ENCODE measurements at regions of chr19 and their contacts with region 1.

Region 1: GRCh38 chr19:19531951-19532805 is 3.5 kb downstream of the YJEFN3 start:
- DNase-seq: peak in 1 of 2 experiments; percentile 74
- H3K4me3 ChIP-seq: no peak overlapping the region
- H3K27ac ChIP-seq: no peak overlapping the region
- H3K4me1 ChIP-seq: no peaks in the 10 kb centered on the region
- H3K27me3 ChIP-seq: no peaks in the 10 kb centered on the region
- CTCF ChIP-seq: peak; percentile 99

Region 2: GRCh38 chr19:19554074-19555023 is 22.2 kb after region 1 on chr19:
- CTCF ChIA-PET with region 1: interaction called, 19 read pairs
- POLR2A ChIA-PET with region 1: no interaction called
- intact Hi-C with region 1: no loop called
- DNase-seq: peak in 1 of 2 experiments; percentile 31
- H3K4me3 ChIP-seq: no peak overlapping the region
- H3K27ac ChIP-seq: no peak overlapping the region
- H3K4me1 ChIP-seq: no peaks in the 10 kb centered on the region
- H3K27me3 ChIP-seq: no peaks in the 10 kb centered on the region
- CTCF ChIP-seq: peak; percentile 92

Region 3: GRCh38 chr19:19581391-19581790 is 49.2 kb after region 1 on chr19:
- CTCF ChIA-PET with region 1: no interaction called
- POLR2A ChIA-PET with region 1: no interaction called
- intact Hi-C with region 1: no loop called
- DNase-seq: no peak
- H3K4me3 ChIP-seq: no peak overlapping the region
- H3K27ac ChIP-seq: no peak overlapping the region
- H3K4me1 ChIP-seq: peaks cover 7% of the 10 kb centered on the region
- H3K27me3 ChIP-seq: no peaks in the 10 kb centered on the region
- CTCF ChIP-seq: no peak

Region 4: GRCh38 chr19:19643158-19644053 is 111.2 kb after region 1 on chr19 and contains the start of gene GMIP:
- CTCF ChIA-PET with region 1: no interaction called
- POLR2A ChIA-PET with region 1: no interaction called
- intact Hi-C with region 1: loop called (anchors 1 kb)
- DNase-seq: peak; percentile 63 to 80
- H3K4me3 ChIP-seq: peak within 1 kb of the TSS; percentile 96
- H3K27ac ChIP-seq: peak within 1 kb of the TSS; percentile 52
- H3K4me1 ChIP-seq: no peaks in the 10 kb centered on the region
- H3K27me3 ChIP-seq: no peaks in the 10 kb centered on the region
- CTCF ChIP-seq: peak; percentile 100
- total RNA-seq, gene GMIP: 15.4 and 18.2 TPM in 2 replicates

Region 5: DNA sequence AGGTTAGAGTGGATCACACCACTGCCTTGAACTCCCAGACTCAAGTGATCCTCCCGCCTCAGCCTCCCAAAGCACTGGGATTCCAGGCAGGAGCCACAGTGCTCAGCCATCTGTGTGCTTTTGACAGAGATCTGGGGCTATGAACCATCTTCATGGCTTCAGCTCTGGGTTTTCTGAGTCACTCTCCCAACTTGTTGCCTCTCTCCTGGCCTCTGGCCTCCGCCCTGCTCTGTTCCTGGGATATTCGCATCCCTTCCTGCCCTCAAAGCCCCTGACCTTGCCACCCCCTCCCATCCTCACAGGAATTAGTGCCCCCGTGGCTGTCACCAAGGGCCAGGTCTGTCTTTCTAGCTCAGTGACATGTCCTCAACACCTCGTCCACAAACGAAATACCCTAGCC is 117.0 kb after region 1 on chr19:
- CTCF ChIA-PET with region 1: no interaction called
- POLR2A ChIA-PET with region 1: interaction called, 22 read pairs
- intact Hi-C with region 1: no loop called
- DNase-seq: no peak
- H3K4me3 ChIP-seq: no peak overlapping the region
- H3K27ac ChIP-seq: no peak overlapping the region
- H3K4me1 ChIP-seq: no peaks in the 10 kb centered on the region
- H3K27me3 ChIP-seq: no peaks in the 10 kb centered on the region
- CTCF ChIP-seq: no peak

Region 6: GRCh38 chr19:20278342-20278741 is 746.2 kb after region 1 on chr19:
- CTCF ChIA-PET with region 1: no interaction called
- POLR2A ChIA-PET with region 1: no interaction called
- intact Hi-C with region 1: loop called (anchors 5 kb)
- DNase-seq: peak; percentile 25 to 47
- H3K4me3 ChIP-seq: no peak overlapping the region
- H3K27ac ChIP-seq: no peak overlapping the region
- H3K4me1 ChIP-seq: no peaks in the 10 kb centered on the region
- H3K27me3 ChIP-seq: no peaks in the 10 kb centered on the region
- CTCF ChIP-seq: peak; percentile 93